ENCODE measurements at regions of chr18 and their contacts with region 1.

Region 1: GRCh38 chr18:37341473-37342086 is 224.0 kb downstream of the CELF4 start:
- DNase-seq: no peak
- H3K4me3 ChIP-seq: no peak overlapping the region
- H3K27ac ChIP-seq: no peak overlapping the region
- H3K4me1 ChIP-seq: no peaks in the 10 kb centered on the region
- H3K27me3 ChIP-seq: peaks cover 0 to 2% of the 10 kb centered on the region in 2 experiments
- CTCF ChIP-seq: no peak
- POLR2A ChIP-seq: no peak

Region 2: GRCh38 chr18:37282386-37283037 is 59.1 kb before region 1 on chr18:
- CTCF ChIA-PET with region 1: no interaction called
- POLR2A ChIA-PET with region 1: no interaction called
- dilution Hi-C with region 1: no loop called
- intact Hi-C with region 1: no loop called
- DNase-seq: no peak
- H3K4me3 ChIP-seq: no peak overlapping the region
- H3K27ac ChIP-seq: no peak overlapping the region
- H3K4me1 ChIP-seq: no peaks in the 10 kb centered on the region
- H3K27me3 ChIP-seq: no peaks in the 10 kb centered on the region
- CTCF ChIP-seq: peak; percentile 14 to 28
- POLR2A ChIP-seq: no peak

Region 3: DNA sequence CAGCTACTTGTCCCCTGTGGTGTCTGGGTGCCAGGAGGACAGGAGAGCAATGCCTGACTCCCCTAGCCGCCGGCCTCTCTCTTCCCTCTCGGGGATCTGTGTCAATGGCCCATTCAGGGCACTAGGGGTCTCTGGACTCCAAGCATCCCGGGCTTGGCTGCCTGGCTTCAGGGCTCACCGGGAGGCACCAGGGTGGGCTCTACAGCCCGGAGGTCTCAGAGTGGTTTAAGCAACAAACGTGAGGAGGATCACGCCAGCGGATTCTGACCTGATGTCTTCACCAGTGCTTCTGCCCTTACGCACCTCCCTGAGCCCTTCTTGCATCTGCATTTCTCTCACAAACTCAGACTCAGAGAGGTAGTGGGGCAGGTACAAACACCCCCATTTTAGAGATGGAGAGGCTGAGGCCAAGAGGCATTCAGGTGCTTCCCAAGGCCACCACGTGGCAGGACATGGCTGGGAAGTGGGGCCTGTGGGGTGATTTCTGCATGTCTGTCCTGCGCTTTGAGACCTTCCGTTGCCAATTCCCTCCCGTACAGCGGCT is 19.0 kb before region 1 on chr18:
- CTCF ChIA-PET with region 1: interaction called, 10 read pairs
- POLR2A ChIA-PET with region 1: no interaction called
- dilution Hi-C with region 1: no loop called
- intact Hi-C with region 1: no loop called
- DNase-seq: peak; percentile 17
- H3K4me3 ChIP-seq: no peak overlapping the region
- H3K27ac ChIP-seq: no peak overlapping the region
- H3K4me1 ChIP-seq: no peaks in the 10 kb centered on the region
- H3K27me3 ChIP-seq: no peaks in the 10 kb centered on the region
- CTCF ChIP-seq: peak; percentile 77 to 88
- POLR2A ChIP-seq: no peak

Region 4: DNA sequence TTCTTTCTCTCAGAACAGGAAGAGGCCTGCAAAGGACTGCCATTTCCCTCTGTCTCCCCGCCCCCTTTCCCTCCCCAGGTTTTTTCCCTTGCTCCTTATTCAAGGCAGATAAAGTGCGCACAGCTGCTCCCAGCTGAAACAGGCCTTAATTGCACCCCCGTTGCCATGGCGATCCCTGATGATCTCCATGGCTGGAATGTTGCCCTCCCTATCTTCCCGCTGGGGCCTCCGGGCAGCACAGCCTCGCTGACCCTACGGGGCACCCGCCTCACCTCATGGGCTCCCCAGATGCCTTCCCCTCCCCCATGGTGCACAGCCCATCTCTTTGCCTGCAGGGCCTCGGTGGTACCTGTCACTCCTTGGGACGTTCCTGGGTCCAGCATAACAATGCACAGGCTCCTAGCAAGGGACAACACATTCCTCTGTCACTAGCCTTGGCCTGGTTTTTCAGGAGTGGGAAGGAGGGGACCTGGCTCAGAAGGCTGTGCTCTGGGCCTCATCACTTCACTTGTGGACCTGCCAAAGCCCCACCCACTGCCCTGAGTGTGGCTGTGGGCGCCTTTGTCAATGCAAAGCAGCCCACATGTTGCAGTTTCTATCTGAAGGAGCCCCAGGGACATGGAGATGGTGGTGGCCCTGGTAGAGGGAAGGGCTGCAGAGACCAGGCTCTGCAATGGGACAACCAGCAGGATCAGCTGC is 109.0 kb after region 1 on chr18:
- CTCF ChIA-PET with region 1: no interaction called
- POLR2A ChIA-PET with region 1: no interaction called
- dilution Hi-C with region 1: no loop called
- intact Hi-C with region 1: no loop called
- DNase-seq: no peak
- H3K4me3 ChIP-seq: no peak overlapping the region
- H3K27ac ChIP-seq: no peak overlapping the region
- H3K4me1 ChIP-seq: no peaks in the 10 kb centered on the region
- H3K27me3 ChIP-seq: no peaks in the 10 kb centered on the region
- CTCF ChIP-seq: no peak
- POLR2A ChIP-seq: no peak

Region 5: DNA sequence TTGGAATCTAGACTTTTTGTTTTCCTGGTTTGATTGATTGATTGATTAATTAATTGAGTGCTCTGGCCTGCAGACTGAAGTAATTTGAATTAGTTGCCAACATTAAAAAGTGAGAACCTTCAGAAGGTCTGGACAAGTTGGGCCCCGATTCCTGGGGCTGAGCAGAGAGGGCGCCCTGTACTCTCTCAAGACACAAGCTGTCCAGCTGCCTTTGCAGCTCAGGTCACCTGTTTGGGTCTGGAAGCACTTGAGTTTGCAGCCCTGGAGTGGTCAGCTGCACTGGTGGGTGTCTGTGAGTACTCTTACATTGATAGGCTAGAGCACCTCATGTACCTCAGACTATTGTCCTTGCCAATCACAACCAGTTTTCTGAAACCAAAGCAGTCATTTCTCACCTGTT is 246.7 kb after region 1 on chr18:
- CTCF ChIA-PET with region 1: no interaction called
- POLR2A ChIA-PET with region 1: no interaction called
- dilution Hi-C with region 1: no loop called
- intact Hi-C with region 1: no loop called
- DNase-seq: no peak
- H3K4me3 ChIP-seq: no peak overlapping the region
- H3K27ac ChIP-seq: no peak overlapping the region
- H3K4me1 ChIP-seq: no peaks in the 10 kb centered on the region
- H3K27me3 ChIP-seq: no peaks in the 10 kb centered on the region
- CTCF ChIP-seq: no peak
- POLR2A ChIP-seq: no peak

Measured in endothelial cell of umbilical vein (primary cell).